HEK293 (cell line): ENCODE measurements at regions of chr10 and their contacts with region 1.

Region 1: DNA sequence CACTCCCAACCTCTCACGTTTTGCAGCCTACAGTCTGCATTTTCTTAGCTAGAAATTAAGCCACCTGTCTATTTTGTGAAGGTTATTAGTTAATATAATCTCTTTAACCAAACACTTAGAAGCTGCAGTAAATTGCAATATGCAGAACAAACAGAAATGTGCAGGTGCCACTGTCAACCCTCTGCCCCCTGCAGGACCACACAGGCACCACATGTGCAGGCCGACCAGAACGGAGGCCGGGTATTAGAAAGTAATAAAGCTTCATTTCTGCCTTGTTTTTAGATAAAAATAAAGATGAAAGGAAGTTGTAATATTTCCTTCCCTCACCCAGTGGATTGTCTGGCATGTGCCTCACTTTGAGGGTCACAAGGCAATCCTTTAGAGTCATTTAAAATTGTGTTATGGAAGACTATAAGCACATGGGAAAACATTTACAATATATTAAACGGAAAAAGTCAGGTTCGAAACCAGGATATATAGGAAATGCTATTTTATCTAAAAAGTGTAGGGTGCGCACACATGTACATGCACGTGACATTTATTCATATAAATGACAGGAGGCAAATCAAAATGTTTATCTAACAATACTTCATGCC is 158.2 kb downstream of the ARHGAP12 start:
- H3K4me3 ChIP-seq: no peak overlapping the region
- H3K27ac ChIP-seq: no peak overlapping the region
- H3K4me1 ChIP-seq: no peaks in the 10 kb centered on the region
- CTCF ChIP-seq: no peak

Region 2: DNA sequence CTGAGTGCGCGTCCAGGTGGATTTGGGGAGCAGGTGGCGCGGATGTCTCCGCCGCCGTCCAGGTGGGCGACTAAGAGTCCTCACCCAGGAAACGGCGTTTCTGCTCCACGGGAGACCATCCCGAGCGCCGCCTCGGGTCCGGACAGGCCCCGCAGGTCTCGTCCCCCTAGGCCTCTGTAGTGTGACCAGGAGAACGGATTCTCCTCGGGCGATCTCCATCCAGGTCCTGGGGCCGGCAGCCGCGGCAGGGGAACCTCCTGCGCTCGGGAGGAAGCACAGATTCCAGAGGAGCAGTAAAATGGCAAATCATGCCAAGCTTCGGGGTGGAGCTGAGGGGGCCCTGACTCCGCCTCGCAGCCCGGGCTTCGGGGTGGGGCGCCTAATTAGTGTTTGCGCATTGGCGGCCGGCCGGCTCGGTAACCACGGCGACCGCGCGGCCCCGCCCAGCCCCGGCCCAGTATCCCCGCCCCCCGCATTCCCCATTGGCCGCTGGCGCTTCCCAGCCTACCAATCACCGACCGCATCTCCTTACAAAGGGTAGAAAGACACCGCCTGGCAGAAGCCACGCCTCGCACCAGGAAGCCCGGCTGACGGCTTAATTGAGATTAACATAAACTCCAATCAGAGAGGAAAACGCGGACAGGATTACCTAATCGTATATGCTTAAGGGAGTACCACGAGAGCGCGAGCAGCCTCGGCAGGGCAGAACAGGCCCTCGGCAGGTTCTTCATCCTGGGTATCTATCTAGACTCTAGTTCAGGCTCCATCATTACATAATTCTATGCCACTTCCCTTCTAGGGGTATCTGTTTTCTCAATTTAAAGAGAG is 10.4 kb before region 1 on chr10:
- CTCF ChIA-PET with region 1: interaction called, 12 read pairs
- POLR2A ChIA-PET with region 1: no interaction called
- H3K4me3 ChIP-seq: peak overlapping the region; percentile 53
- H3K27ac ChIP-seq: peak overlapping the region; percentile 78
- H3K4me1 ChIP-seq: 0 out of 2 replicates have a peak, but pooled peaks cover 4% of the 10 kb centered on the region
- CTCF ChIP-seq: no peak